Activated naive CD8-positive, alpha-beta T cell treated with anti-CD3 and anti-CD28 coated beads, Interleukin-2, amount 10 ng/mL, durations not matched to agents 7 days and 5 days (primary cell): ENCODE measurements at regions of chr7 and their contacts with region 1.

Region 1: GRCh38 chr7:45026984-45027773 is 27.2 kb downstream of the CCM2 start:
- DNase-seq: peak; percentile 56
- ATAC-seq: peak; percentile 62
- H3K4me3 Mint-ChIP-seq: peak overlapping the region; percentile 86
- H3K27ac Mint-ChIP-seq: peak overlapping the region; percentile 86
- H3K4me1 Mint-ChIP-seq: peaks cover 54% of the 10 kb centered on the region
- H3K27me3 Mint-ChIP-seq: no peaks in the 10 kb centered on the region

Region 2: GRCh38 chr7:44973610-44974401 is 53.4 kb before region 1 on chr7:
- POLR2A ChIA-PET with region 1: interaction called, 80 read pairs
- DNase-seq: peak; percentile 70
- ATAC-seq: peak; percentile 16
- H3K4me3 Mint-ChIP-seq: no peak overlapping the region
- H3K27ac Mint-ChIP-seq: peak overlapping the region; percentile 45
- H3K4me1 Mint-ChIP-seq: peaks cover 21% of the 10 kb centered on the region
- H3K27me3 Mint-ChIP-seq: no peaks in the 10 kb centered on the region

Region 3: DNA sequence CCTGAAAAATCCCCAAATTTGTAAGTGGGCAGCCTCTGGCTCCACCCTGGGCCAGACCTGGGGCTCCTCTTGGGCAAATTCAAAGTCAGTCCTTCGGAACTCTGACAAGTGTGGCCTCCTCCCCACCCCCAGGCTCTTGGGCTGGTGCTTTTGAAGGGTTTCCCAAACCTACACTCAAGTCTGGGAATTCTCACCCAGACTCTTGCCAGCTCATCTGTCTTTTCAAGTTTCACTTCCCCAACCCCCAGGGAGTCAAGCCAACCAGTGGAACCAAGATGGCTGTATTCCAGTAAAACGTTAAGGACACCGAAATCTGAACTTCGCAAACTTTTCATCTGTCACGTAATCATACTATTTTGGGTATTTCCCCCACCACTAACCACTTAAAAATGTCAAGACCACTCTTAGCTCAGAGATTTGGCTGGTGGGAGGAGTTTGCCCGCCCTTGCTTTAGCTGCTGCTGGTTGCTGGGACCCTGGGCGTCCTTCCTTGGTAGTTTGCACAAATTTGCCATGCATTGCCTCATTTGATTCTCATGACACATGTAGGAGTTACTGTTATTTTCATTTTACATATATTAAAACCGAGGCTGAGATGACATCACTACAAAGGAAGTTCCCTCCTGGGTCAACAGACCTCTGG is 46.7 kb before region 1 on chr7:
- POLR2A ChIA-PET with region 1: interaction called, 80 read pairs
- DNase-seq: peak; percentile 59
- ATAC-seq: peak; percentile 10
- H3K4me3 Mint-ChIP-seq: peak overlapping the region; percentile 94
- H3K27ac Mint-ChIP-seq: peak overlapping the region; percentile 93
- H3K4me1 Mint-ChIP-seq: peaks cover 60% of the 10 kb centered on the region
- H3K27me3 Mint-ChIP-seq: no peaks in the 10 kb centered on the region

Region 4: GRCh38 chr7:44986218-44987053 is 40.7 kb before region 1 on chr7:
- POLR2A ChIA-PET with region 1: interaction called, 80 read pairs
- DNase-seq: peak; percentile 99
- ATAC-seq: peak; percentile 95
- H3K4me3 Mint-ChIP-seq: peak overlapping the region; percentile 98
- H3K27ac Mint-ChIP-seq: peak overlapping the region; percentile 98
- H3K4me1 Mint-ChIP-seq: peaks cover 44% of the 10 kb centered on the region
- H3K27me3 Mint-ChIP-seq: no peaks in the 10 kb centered on the region

Region 5: DNA sequence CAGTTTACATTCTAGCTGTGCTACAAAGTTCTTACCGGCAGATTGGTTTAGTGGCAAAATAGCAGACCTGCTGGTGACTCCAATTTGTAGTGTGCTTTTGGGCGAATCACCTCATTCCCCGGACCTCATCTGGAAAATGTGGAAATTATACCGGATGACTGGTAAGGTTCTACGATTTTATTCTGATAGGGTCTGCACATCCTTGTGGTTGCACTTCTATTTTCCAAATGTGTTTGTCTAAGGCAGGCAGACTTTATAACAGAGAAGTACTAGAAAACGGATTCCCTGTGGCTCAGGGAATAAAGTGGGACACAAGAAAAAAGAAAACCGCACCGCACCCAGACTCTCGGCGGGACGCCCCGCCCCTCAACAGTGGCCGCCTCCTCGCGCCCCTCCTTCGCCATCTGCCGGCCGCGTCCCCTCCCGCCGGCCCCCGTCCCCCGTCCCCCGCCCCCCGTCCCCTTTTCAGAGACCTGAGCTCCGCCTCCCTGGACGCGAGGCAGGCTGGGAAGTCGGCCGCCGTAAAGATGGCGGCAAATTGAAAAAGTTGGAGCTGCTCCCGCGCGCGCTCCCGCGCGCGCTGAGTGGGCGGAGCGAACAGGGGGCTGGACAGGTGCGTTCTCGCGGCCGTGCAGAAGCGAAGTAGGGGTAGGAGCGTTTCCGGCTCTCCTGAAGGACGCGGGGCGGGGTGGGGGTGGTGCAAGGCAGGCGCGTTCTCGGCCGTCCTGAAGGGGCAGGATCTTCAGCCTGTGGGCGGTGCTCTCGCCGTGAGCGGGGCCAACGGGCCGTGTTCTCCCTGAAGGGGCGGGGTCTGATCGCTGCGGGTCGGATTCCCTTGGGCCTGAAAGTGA is 27.7 kb before region 1 on chr7:
- POLR2A ChIA-PET with region 1: interaction called, 80 read pairs
- DNase-seq: peak; percentile 98
- ATAC-seq: peak; percentile 89
- H3K4me3 Mint-ChIP-seq: peak overlapping the region; percentile 84
- H3K27ac Mint-ChIP-seq: peak overlapping the region; percentile 92
- H3K4me1 Mint-ChIP-seq: peaks cover 39% of the 10 kb centered on the region
- H3K27me3 Mint-ChIP-seq: no peaks in the 10 kb centered on the region

Region 6: GRCh38 chr7:45007571-45008328 is 19.4 kb before region 1 on chr7:
- POLR2A ChIA-PET with region 1: interaction called, 80 read pairs
- DNase-seq: peak; percentile 47
- ATAC-seq: peak; percentile 75
- H3K4me3 Mint-ChIP-seq: peak overlapping the region; percentile 38
- H3K27ac Mint-ChIP-seq: peak overlapping the region; percentile 70
- H3K4me1 Mint-ChIP-seq: peaks cover 38% of the 10 kb centered on the region
- H3K27me3 Mint-ChIP-seq: no peaks in the 10 kb centered on the region

Region 7: GRCh38 chr7:45111298-45112223 is 84.4 kb after region 1 on chr7 and contains the start of gene TBRG4:
- POLR2A ChIA-PET with region 1: interaction called, 10 read pairs
- DNase-seq: peak; percentile 97
- ATAC-seq: peak; percentile 86
- H3K4me3 Mint-ChIP-seq: peak within 1 kb of the TSS; percentile 97
- H3K27ac Mint-ChIP-seq: peak within 1 kb of the TSS; percentile 94
- H3K4me1 Mint-ChIP-seq: peaks cover 35% of the 10 kb centered on the region
- H3K27me3 Mint-ChIP-seq: peaks cover 10% of the 10 kb centered on the region
- total RNA-seq, gene TBRG4: 123 to 127 TPM